CD8-positive, alpha-beta T cell (primary cell): ENCODE measurements at regions of chr19 and their contacts with region 1.

Region 1: GRCh38 chr19:17266975-17267788 is at the start of gene BABAM1:
- DNase-seq: peak; percentile 81 to 98 (median 92)
- ATAC-seq: peak; percentile 93
- H3K4me3 ChIP-seq: peak within 1 kb of the TSS; percentile 72 to 82
- H3K4me3 Mint-ChIP-seq: peak within 1 kb of the TSS; percentile 79
- H3K27ac ChIP-seq: peak within 1 kb of the TSS; percentile 61 to 77
- H3K27ac Mint-ChIP-seq: peak within 1 kb of the TSS; percentile 63
- H3K4me1 ChIP-seq: peaks cover 14% of the 10 kb centered on the region
- H3K4me1 Mint-ChIP-seq: peaks cover 18% of the 10 kb centered on the region
- H3K27me3 ChIP-seq: no peaks in the 10 kb centered on the region
- H3K27me3 Mint-ChIP-seq: no peaks in the 10 kb centered on the region
- CTCF ChIP-seq: no peak
- total RNA-seq, gene BABAM1: 46.9 to 58.0 TPM

Region 2: GRCh38 chr19:17226002-17226933 is 40.9 kb before region 1 on chr19 and contains the start of gene OCEL1:
- CTCF ChIA-PET with region 1: interaction called, 3 read pairs
- POLR2A ChIA-PET with region 1: interaction called, 8 read pairs
- intact Hi-C with region 1: loop called (anchors 1 kb)
- DNase-seq: peak; percentile 92 to 99 (median 96)
- ATAC-seq: peak; percentile 91
- H3K4me3 ChIP-seq: peak within 1 kb of the TSS; percentile 71 to 100
- H3K4me3 Mint-ChIP-seq: peak within 1 kb of the TSS; percentile 91
- H3K27ac ChIP-seq: peak within 1 kb of the TSS; percentile 89 to 96
- H3K27ac Mint-ChIP-seq: peak within 1 kb of the TSS; percentile 95
- H3K4me1 ChIP-seq: peaks cover 13% of the 10 kb centered on the region
- H3K4me1 Mint-ChIP-seq: peaks cover 8% of the 10 kb centered on the region
- H3K27me3 ChIP-seq: no peaks in the 10 kb centered on the region
- H3K27me3 Mint-ChIP-seq: no peaks in the 10 kb centered on the region
- CTCF ChIP-seq: no peak
- total RNA-seq, gene OCEL1: 20.9 to 24.9 TPM

Region 3: GRCh38 chr19:17255150-17255621 is 12.0 kb before region 1 on chr19:
- CTCF ChIA-PET with region 1: interaction called, 11 read pairs
- POLR2A ChIA-PET with region 1: no interaction called
- intact Hi-C with region 1: no loop called
- DNase-seq: no peak
- ATAC-seq: no peak
- H3K4me3 ChIP-seq: no peak overlapping the region
- H3K4me3 Mint-ChIP-seq: no peak overlapping the region
- H3K27ac ChIP-seq: no peak overlapping the region
- H3K27ac Mint-ChIP-seq: no peak overlapping the region
- H3K4me1 ChIP-seq: no peaks in the 10 kb centered on the region
- H3K4me1 Mint-ChIP-seq: no peaks in the 10 kb centered on the region
- H3K27me3 ChIP-seq: no peaks in the 10 kb centered on the region
- H3K27me3 Mint-ChIP-seq: no peaks in the 10 kb centered on the region
- CTCF ChIP-seq: no peak

Region 4: DNA sequence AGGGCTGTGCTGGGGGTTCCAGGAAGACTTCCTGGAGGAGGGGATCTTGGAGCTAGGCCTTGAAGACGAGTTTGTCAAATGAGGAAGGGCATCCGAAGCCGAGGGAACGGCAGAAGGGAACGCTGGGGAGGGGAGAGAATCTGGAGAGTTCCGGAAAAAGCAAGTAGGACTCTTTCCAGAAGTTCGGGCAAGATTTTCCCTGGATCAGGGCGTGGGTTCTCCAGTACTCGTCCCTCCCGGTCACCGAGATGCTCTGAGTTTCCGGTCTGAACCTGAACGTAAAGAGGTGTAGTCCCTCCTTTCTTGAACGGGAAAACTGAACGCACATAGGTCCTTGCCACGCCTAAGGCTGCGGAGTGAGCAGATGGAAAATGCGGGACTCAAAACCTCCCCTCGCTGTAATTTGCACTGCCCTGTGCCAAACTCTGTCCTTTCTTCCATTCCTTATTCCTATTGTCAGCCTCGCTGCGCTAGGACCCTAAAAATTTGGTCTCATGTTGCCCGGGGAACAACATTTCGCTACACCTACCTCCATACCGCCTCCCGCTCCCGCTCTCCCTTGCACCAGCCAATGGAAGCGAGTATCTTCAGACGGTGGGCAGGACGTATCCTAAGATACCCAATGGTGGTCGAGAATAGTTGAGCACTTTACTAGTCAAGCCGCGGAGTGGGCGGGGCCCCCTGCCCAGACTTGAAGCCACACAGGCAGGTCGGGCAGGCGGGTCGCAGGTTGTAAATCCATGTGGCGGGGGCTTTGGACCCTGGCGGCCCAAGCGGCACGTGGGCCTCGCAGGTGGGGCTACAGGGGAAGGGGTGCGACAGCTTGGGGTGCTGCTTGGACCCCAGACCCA is 69.9 kb after region 1 on chr19 and contains the start of gene GTPBP3:
- CTCF ChIA-PET with region 1: interaction called, 3 read pairs
- POLR2A ChIA-PET with region 1: no interaction called
- intact Hi-C with region 1: loop called (anchors 1 kb)
- DNase-seq: peak; percentile 90 to 99 (median 95)
- ATAC-seq: peak; percentile 90
- H3K4me3 ChIP-seq: peak within 1 kb of the TSS; percentile 90 to 98
- H3K4me3 Mint-ChIP-seq: peak within 1 kb of the TSS; percentile 88
- H3K27ac ChIP-seq: peak within 1 kb of the TSS; percentile 75 to 91
- H3K27ac Mint-ChIP-seq: peak within 1 kb of the TSS; percentile 91
- H3K4me1 ChIP-seq: peaks cover 34% of the 10 kb centered on the region
- H3K4me1 Mint-ChIP-seq: peaks cover 34% of the 10 kb centered on the region
- H3K27me3 ChIP-seq: no peaks in the 10 kb centered on the region
- H3K27me3 Mint-ChIP-seq: no peaks in the 10 kb centered on the region
- CTCF ChIP-seq: no peak
- total RNA-seq, gene GTPBP3: 20.8 to 25.7 TPM